Caco-2 (cell line): ENCODE measurements at regions of chr11 and their contacts with region 1.

Region 1: GRCh38 chr11:126797457-126798169 is 203.0 kb downstream of the KIRREL3 start:
- DNase-seq: no peak
- H3K4me3 ChIP-seq: no peak overlapping the region
- H3K4me3 Mint-ChIP-seq: no peak overlapping the region
- H3K27ac Mint-ChIP-seq: no peak overlapping the region
- H3K4me1 ChIP-seq: no peaks in the 10 kb centered on the region
- H3K4me1 Mint-ChIP-seq: no peaks in the 10 kb centered on the region
- H3K27me3 ChIP-seq: 0 out of 2 replicates have a peak, but pooled peaks cover 2% of the 10 kb centered on the region
- H3K27me3 Mint-ChIP-seq: peaks cover 17% of the 10 kb centered on the region
- CTCF ChIP-seq: no peak

Region 2: GRCh38 chr11:126727381-126727780 is 70.2 kb before region 1 on chr11:
- CTCF ChIA-PET with region 1: no interaction called
- POLR2A ChIA-PET with region 1: no interaction called
- intact Hi-C with region 1: loop called (anchors 5 kb)
- DNase-seq: no peak
- H3K4me3 ChIP-seq: no peak overlapping the region
- H3K4me3 Mint-ChIP-seq: no peak overlapping the region
- H3K27ac Mint-ChIP-seq: no peak overlapping the region
- H3K4me1 ChIP-seq: no peaks in the 10 kb centered on the region
- H3K4me1 Mint-ChIP-seq: no peaks in the 10 kb centered on the region
- H3K27me3 ChIP-seq: peaks cover under 1% of the 10 kb centered on the region
- H3K27me3 Mint-ChIP-seq: peaks cover 26% of the 10 kb centered on the region
- CTCF ChIP-seq: no peak

Region 3: GRCh38 chr11:126834149-126834548 is 36.5 kb after region 1 on chr11:
- CTCF ChIA-PET with region 1: no interaction called
- POLR2A ChIA-PET with region 1: no interaction called
- intact Hi-C with region 1: no loop called
- DNase-seq: no peak
- H3K4me3 ChIP-seq: no peak overlapping the region
- H3K4me3 Mint-ChIP-seq: no peak overlapping the region
- H3K27ac Mint-ChIP-seq: no peak overlapping the region
- H3K4me1 ChIP-seq: no peaks in the 10 kb centered on the region
- H3K4me1 Mint-ChIP-seq: no peaks in the 10 kb centered on the region
- H3K27me3 ChIP-seq: no peaks in the 10 kb centered on the region
- H3K27me3 Mint-ChIP-seq: peaks cover 20% of the 10 kb centered on the region
- CTCF ChIP-seq: no peak